ENCODE measurements at regions of chr6 and their contacts with region 1.

Region 1: GRCh38 chr6:21527731-21528130 is 65.8 kb upstream of the SOX4 start:
- DNase-seq: no peak
- H3K4me3 Mint-ChIP-seq: no peak overlapping the region
- H3K27ac Mint-ChIP-seq: no peak overlapping the region
- H3K4me1 Mint-ChIP-seq: no peaks in the 10 kb centered on the region
- H3K27me3 Mint-ChIP-seq: no peaks in the 10 kb centered on the region
- CTCF ChIP-seq: no peak

Region 2: DNA sequence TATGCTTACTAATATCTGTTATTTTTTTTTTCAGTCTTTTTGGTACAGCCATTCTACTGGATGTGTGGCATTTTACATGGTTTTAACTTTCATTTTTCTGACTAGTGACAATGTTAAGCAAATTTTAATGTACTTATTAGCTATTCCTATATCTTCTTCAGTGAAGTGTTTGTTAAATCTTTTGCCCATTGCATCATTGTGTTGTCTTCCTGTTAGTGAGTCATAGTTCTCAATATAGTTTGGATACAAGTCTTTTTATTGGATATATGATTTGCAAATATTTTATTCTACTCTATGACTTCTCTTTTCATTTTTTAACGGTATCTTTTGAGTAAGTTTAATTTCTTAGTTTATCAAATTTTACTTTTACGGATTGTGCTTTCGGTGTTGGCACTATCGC is 474.1 kb before region 1 on chr6:
- CTCF ChIA-PET with region 1: interaction called, 10 read pairs
- intact Hi-C with region 1: no loop called
- DNase-seq: no peak
- H3K4me3 Mint-ChIP-seq: no peak overlapping the region
- H3K27ac Mint-ChIP-seq: peak overlapping the region; percentile 63
- H3K4me1 Mint-ChIP-seq: peaks cover 35% of the 10 kb centered on the region
- H3K27me3 Mint-ChIP-seq: no peaks in the 10 kb centered on the region
- CTCF ChIP-seq: no peak

Region 3: GRCh38 chr6:21396313-21396712 is 131.4 kb before region 1 on chr6:
- CTCF ChIA-PET with region 1: no interaction called
- intact Hi-C with region 1: no loop called
- DNase-seq: no peak
- H3K4me3 Mint-ChIP-seq: no peak overlapping the region
- H3K27ac Mint-ChIP-seq: no peak overlapping the region
- H3K4me1 Mint-ChIP-seq: peaks cover 9% of the 10 kb centered on the region
- H3K27me3 Mint-ChIP-seq: no peaks in the 10 kb centered on the region
- CTCF ChIP-seq: no peak

Region 4: DNA sequence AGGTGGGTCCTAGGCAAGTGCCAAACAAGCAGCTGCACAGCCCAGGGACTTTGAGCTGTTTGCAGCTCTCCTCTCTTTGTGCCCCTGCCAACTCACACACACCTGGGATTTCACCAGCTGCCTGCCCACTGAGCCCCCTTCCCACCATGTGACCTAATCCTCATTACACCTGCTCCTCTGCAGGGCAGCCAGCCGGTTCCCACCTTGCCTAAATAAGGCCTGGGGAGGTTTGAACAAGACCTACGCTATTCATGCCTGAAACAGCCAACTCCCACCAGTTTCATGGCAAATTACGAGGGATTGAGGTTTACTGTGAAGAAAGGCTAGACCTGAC is 26.7 kb before region 1 on chr6:
- CTCF ChIA-PET with region 1: no interaction called
- intact Hi-C with region 1: no loop called
- DNase-seq: no peak
- H3K4me3 Mint-ChIP-seq: no peak overlapping the region
- H3K27ac Mint-ChIP-seq: no peak overlapping the region
- H3K4me1 Mint-ChIP-seq: no peaks in the 10 kb centered on the region
- H3K27me3 Mint-ChIP-seq: no peaks in the 10 kb centered on the region
- CTCF ChIP-seq: no peak

Measured in Calu3 (cell line).